CD8-positive, alpha-beta T cell (primary cell): ENCODE measurements at regions of chr6 and their contacts with region 1.

Region 1: DNA sequence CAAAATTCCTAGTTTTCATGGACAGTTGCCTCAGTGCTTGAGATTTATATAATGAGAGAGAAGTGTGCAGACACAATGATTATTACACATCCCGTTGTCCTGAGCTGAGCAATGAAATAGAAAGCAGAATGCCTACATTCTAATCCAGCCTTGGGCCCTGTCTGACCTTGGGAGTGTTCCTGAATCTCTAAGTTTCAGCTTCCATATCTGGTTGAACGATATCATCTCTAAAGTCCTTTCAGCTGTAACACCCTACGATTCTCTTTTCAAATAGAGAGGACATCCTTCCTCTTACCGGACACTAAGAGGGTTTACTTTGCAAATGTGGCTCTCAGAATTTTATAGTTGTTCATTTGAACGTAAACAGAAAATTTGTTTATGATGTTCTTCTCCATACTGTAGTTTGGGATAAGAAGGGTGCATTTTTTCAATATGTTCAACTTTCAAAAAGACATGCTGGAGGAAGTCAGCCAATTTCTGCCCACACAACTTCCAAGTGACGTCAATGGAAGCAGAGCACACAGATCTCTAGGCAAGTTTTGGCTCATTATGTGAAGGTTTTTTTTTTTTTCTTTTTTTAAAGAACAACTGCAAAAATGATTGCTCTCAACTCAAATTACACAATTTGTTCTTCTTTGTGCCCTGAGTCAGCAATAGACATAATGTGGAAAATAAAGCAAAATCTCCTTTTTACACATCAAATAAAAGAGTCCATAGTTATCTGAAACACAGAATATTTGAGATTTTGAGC is 50.4 kb downstream of the PDE7B start:
- DNase-seq: peak in 3 of 9 experiments; percentile 15 to 40 (median 28)
- ATAC-seq: peak; percentile 36
- H3K4me3 ChIP-seq: no peak overlapping the region
- H3K4me3 Mint-ChIP-seq: no peak overlapping the region
- H3K27ac ChIP-seq: no peak overlapping the region
- H3K27ac Mint-ChIP-seq: no peak overlapping the region
- H3K4me1 ChIP-seq: peaks cover 11% of the 10 kb centered on the region
- H3K4me1 Mint-ChIP-seq: peaks cover 18% of the 10 kb centered on the region
- H3K27me3 ChIP-seq: no peaks in the 10 kb centered on the region
- H3K27me3 Mint-ChIP-seq: no peaks in the 10 kb centered on the region
- CTCF ChIP-seq: no peak

Region 2: DNA sequence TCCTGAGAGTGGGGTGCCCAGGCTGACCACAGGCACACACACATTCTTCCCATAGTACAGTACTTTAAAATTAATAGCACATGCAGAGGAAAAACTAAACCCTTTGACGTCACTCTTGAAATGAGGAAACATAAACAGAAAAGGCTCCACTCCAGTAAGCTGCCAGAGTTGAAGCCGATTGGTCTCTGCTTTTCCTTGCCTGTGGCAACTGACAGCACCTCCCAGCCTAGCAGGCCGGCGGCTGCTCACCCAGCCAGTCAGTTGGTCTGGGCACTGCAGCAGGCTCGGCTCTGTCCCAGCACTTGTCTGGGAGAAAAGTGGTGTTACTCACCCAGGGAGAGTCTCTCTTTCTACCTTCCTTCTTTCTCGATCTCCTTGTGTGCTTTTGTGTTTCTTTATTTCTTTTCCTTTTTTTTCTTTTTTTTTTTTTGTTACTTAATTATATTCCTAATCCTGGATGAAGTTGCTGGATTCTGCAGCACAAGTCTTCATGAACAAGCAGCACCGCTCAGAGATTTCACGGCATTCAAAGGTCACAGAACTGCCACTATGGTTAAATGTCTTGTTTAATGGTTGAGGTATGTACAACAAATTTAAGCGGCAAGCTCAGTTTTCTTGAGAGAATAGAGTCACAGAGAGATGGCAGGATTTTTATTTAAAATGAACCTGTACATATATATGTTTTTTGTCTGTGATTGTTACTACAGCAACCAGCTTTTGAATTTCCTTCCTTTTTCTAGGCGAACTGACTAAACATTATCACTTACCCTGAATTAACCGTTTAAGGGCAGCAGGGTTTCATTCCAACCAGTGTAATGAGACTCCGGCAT is 50.3 kb before region 1 on chr6 and contains the start of gene PDE7B:
- CTCF ChIA-PET with region 1: interaction called, 3 read pairs
- POLR2A ChIA-PET with region 1: interaction called, 3 read pairs
- intact Hi-C with region 1: loop called in 1 of 2 experiments (anchors 5 kb)
- DNase-seq: peak; percentile 5 to 64 (median 32)
- ATAC-seq: peak; percentile 74
- H3K4me3 ChIP-seq: peak within 1 kb of the TSS; percentile 38 to 42
- H3K4me3 Mint-ChIP-seq: peak within 1 kb of the TSS; percentile 78
- H3K27ac ChIP-seq: peak within 1 kb of the TSS in 1 of 2 experiments; percentile 17
- H3K27ac Mint-ChIP-seq: peak within 1 kb of the TSS; percentile 79
- H3K4me1 ChIP-seq: peaks cover 4% of the 10 kb centered on the region
- H3K4me1 Mint-ChIP-seq: peaks cover 32% of the 10 kb centered on the region
- H3K27me3 ChIP-seq: no peaks in the 10 kb centered on the region
- H3K27me3 Mint-ChIP-seq: no peaks in the 10 kb centered on the region
- CTCF ChIP-seq: no peak
- total RNA-seq, gene PDE7B: 0.11 to 0.22 TPM

Region 3: DNA sequence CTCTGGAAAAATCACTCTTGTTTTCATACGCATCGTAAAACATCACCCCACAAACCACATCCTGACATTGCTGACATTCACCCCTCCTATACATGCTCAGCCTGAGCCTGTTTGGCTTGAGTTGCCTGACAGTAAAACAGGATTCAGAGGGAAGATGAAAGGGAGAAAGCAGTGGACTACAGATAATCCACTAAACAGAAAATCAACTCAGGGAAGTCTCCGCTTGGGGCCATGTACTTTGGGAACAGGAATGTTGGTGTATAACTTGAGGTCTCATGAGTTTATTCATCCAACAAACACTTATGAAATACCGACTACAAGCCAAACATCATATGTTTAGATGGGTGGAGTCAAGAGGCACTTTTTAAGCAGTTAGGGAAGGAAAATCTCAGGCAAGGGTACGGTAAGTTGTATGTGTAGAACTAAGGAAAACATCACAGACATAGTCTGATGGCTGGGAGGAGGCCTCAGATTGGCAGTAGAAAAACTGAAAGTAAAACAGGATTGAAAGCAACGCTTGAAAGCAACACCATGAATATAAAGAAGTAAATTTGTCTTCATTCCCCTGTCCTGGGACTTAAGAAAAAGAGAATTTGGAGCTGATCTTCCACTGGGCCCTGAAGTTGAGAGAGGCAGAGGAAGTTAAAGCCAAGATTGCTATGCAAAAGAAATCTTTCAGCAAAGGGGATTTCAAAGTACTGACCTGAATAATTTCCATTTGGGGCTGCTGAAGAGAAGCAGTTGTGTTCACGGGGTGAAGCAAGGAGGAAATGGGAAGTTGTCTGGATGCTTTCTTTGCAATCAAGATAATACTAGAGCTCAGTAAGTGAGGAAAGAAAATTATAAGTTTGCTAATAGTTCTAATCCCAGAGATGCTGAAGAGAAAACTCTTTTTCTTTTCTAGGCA is 21.6 kb before region 1 on chr6:
- CTCF ChIA-PET with region 1: interaction called, 3 read pairs
- POLR2A ChIA-PET with region 1: interaction called, 3 read pairs
- intact Hi-C with region 1: loop called in 1 of 2 experiments (anchors 2 kb)
- DNase-seq: peak; percentile 24 to 87 (median 64)
- ATAC-seq: peak; percentile 84
- H3K4me3 ChIP-seq: peak overlapping the region; percentile 49 to 53
- H3K4me3 Mint-ChIP-seq: peak overlapping the region; percentile 79
- H3K27ac ChIP-seq: peak overlapping the region; percentile 84 to 96
- H3K27ac Mint-ChIP-seq: peak overlapping the region; percentile 95
- H3K4me1 ChIP-seq: peaks cover 41% of the 10 kb centered on the region
- H3K4me1 Mint-ChIP-seq: peaks cover 56% of the 10 kb centered on the region
- H3K27me3 ChIP-seq: no peaks in the 10 kb centered on the region
- H3K27me3 Mint-ChIP-seq: no peaks in the 10 kb centered on the region
- CTCF ChIP-seq: no peak

Region 4: GRCh38 chr6:135919026-135919425 is 17.1 kb after region 1 on chr6:
- CTCF ChIA-PET with region 1: no interaction called
- POLR2A ChIA-PET with region 1: no interaction called
- intact Hi-C with region 1: no loop called
- DNase-seq: no peak
- ATAC-seq: no peak
- H3K4me3 ChIP-seq: no peak overlapping the region
- H3K4me3 Mint-ChIP-seq: no peak overlapping the region
- H3K27ac ChIP-seq: no peak overlapping the region
- H3K27ac Mint-ChIP-seq: no peak overlapping the region
- H3K4me1 ChIP-seq: no peaks in the 10 kb centered on the region
- H3K4me1 Mint-ChIP-seq: no peaks in the 10 kb centered on the region
- H3K27me3 ChIP-seq: no peaks in the 10 kb centered on the region
- H3K27me3 Mint-ChIP-seq: peaks cover 3% of the 10 kb centered on the region
- CTCF ChIP-seq: no peak